ENCODE measurements at regions of chr19 and their contacts with region 1.

Region 1: DNA sequence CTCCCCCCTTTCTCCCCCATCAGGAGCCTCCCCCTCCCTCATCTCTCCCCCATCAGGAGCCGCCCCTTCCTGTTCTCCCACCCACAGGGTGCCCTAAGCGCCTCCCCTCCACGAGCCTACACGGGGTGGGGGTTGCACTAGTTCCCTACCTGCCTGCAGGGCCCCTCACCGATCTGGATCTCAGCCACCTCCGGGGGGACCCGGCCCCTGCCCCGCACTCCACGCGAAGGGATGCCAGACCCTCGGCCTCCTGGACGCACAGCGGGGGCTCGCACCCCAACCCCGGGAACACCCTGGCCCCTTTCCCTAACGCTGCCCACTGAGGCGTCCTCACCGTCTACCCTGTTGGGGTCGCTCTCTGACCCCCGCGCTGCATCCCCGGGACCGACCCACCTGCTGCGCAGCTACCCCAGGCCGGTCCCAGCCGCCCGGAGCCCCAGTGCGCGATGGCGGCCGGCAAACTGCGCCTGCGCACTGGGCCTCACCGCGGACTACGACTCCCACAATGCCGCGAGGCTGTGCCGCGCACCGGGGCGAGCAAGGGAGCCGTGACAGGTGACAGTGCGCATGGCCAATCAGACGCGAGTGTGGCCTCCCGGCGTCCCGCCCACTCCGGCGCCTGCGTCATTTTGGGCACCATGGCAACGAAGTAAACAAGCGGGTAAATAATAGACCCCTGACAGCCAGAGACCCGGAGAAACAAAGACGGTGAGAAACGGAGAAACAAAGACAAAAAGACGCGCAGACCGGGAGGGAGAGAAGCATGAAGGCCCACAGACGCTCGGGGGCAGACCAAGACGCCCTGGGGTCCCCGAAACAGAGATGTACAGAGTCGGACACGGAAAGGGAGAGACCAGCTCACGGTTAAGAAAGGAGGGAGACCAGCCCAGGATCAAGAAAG is at the start of gene ZSCAN18:
- DNase-seq: peak; percentile 97
- ATAC-seq: peak; percentile 99
- H3K4me3 Mint-ChIP-seq: peak within 1 kb of the TSS; percentile 82
- H3K27ac Mint-ChIP-seq: peak within 1 kb of the TSS; percentile 97
- H3K4me1 Mint-ChIP-seq: peaks cover 13% of the 10 kb centered on the region
- H3K27me3 Mint-ChIP-seq: no peaks in the 10 kb centered on the region
- total RNA-seq, gene ZSCAN18: 23.1 to 29.2 TPM

Region 2: GRCh38 chr19:57888560-57889231 is 209.3 kb before region 1 on chr19 and contains the start of gene ZNF814:
- CTCF ChIA-PET with region 1: no interaction called
- POLR2A ChIA-PET with region 1: no interaction called
- intact Hi-C with region 1: loop called in 1 of 2 experiments (anchors 1 kb)
- DNase-seq: peak; percentile 91
- ATAC-seq: peak; percentile 94
- H3K4me3 Mint-ChIP-seq: peak within 1 kb of the TSS; percentile 96
- H3K27ac Mint-ChIP-seq: peak within 1 kb of the TSS; percentile 92
- H3K4me1 Mint-ChIP-seq: peaks cover 23% of the 10 kb centered on the region
- H3K27me3 Mint-ChIP-seq: no peaks in the 10 kb centered on the region
- total RNA-seq, gene ZNF814: 24.1 to 24.5 TPM

Region 3: DNA sequence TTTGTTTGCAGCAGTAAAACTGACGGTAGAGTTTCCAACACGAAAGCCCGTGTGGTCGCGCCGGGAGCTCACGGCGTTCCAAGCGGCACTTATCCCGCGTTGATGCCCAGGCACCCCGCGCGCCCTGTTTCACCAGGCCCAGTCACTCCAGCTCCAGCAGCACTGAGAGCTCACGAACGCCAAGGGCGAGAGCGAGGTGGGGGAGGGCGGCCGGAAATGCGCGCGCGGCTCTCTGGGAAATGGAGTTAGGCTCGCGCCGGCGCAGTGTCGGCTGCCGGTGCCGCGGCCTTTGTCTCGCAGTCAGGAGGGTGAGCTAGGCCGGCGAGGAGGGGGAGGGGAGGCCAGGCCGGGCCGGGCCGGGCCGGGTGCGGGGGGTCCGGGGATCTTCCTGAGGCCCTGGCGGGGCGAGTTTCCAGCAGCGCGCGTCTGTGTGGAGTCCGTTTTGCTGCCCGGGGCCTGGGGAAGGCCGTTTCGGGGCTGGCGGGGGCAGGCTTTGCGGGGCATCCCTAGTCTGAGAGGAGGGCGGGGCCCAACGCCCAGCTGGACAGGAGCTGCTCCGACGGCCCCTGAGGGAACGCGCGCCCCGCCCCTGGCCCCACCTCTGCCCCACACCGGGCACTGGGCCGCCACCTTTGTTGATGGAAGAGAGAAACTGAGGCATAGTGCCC is 38.9 kb before region 1 on chr19 and contains the start of gene ZNF135:
- CTCF ChIA-PET with region 1: no interaction called
- POLR2A ChIA-PET with region 1: no interaction called
- intact Hi-C with region 1: loop called in 1 of 2 experiments (anchors 1 kb)
- DNase-seq: peak; percentile 86
- ATAC-seq: peak; percentile 97
- H3K4me3 Mint-ChIP-seq: peak within 1 kb of the TSS; percentile 73
- H3K27ac Mint-ChIP-seq: peak within 1 kb of the TSS; percentile 89
- H3K4me1 Mint-ChIP-seq: peaks cover 4% of the 10 kb centered on the region
- H3K27me3 Mint-ChIP-seq: peaks cover 21% of the 10 kb centered on the region
- total RNA-seq, gene ZNF135: 1.3 to 1.5 TPM

Measured in activated CD4-positive, alpha-beta T cell treated with anti-CD3 and anti-CD28 coated beads for 36 hours (primary cell).